Transverse colon (tissue), 4 donors: ENCODE measurements at regions of chr1 and their contacts with region 1.

Region 1: DNA sequence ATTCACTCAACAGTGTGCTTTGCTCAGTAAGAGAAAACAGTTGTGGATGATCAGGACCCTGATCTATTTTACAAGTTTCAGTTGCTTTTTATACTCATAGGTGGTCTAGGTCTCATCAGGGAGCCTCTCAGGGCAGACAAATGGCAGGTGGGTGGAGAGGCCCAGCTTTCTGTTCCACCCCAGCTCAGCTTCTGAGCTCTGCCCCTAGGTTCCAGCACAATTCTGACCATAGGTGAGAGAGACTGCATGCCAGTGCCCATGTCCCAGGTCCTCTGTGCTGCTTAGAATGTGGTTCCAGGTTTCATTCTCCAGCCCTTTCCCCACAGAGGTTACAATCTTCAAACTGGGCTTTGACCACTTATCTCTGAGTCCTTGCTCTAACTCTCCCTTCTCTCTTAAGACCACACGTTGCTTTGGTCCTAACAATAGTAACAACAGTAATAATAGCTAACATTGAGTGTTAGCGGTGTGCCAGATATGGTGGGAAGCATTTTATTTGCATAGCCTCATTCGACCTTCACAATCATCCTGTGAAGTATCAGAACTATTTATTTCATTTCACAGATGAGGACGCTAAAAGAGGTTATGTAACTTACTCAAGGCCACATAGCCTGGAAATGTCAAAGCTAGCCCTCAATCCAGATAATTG is 19.6 kb upstream of the DUSP10 start:
- DNase-seq: no peak
- H3K4me3 ChIP-seq: no peak overlapping the region
- H3K27ac ChIP-seq: no peak overlapping the region
- H3K4me1 ChIP-seq: no peaks in the 10 kb centered on the region
- H3K27me3 ChIP-seq: no peaks in the 10 kb centered on the region
- CTCF ChIP-seq: no peak
- EP300 ChIP-seq: no peak
- POLR2A ChIP-seq: no peak

Region 2: DNA sequence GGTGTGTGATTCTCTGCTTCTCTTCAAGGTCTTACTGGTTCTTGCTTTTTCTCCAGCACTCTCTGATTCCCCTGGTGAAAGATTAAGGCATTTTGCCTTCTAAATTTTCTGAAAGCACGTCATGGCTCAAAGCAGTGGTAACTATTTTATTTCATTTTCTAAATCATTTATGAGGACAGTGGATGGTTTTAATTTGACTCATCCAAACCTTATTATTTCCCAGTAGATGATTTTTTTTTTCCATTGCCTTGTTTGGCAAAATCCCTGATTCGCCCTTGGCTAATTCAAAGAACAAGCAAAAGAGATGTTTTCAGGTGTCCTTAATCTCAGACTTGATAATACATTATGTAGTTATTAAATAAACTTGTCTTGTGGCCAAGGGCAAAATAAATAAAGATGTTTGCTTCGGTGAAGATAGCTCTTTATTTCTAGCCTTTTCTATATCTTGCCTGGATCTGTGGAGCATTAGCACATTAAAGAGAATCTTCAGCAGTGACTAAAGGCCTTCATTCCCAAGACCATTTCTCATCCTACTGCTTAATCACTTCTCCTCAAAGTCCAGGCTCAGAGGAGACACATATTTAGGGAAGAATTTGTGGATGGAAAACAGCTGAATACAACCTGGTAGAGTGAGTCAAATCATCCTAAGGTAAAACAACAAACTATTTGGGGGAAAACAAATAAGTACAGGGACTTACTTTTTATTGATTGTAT is 379.4 kb before region 1 on chr1:
- in situ Hi-C with region 1: no loop called
- intact Hi-C with region 1: no loop called
- DNase-seq: no peak
- H3K4me3 ChIP-seq: no peak overlapping the region
- H3K27ac ChIP-seq: no peak overlapping the region
- H3K4me1 ChIP-seq: no peaks in the 10 kb centered on the region
- H3K27me3 ChIP-seq: no peaks in the 10 kb centered on the region
- CTCF ChIP-seq: no peak
- EP300 ChIP-seq: no peak
- POLR2A ChIP-seq: no peak

Region 3: DNA sequence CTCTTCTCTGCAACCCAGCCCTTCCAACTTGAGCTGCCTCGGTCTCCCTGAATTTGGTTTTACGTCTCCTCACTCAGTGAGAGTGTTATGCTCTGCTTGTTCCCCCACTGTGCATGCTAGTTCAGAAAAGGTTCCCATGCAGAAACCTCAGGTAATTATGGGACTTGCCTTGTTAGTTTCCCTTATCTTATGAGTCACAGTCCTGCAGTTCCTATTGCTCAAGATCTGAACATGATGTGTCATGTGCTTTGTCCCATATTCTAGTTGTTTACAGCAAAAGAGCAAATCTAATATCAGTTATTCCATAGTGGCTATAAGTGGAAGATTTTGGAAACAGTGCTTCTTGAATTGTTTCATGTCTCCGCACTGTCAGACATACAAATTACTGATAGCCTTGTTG is 94.0 kb before region 1 on chr1:
- in situ Hi-C with region 1: no loop called
- intact Hi-C with region 1: no loop called
- DNase-seq: no peak
- H3K4me3 ChIP-seq: no peak overlapping the region
- H3K27ac ChIP-seq: no peak overlapping the region
- H3K4me1 ChIP-seq: no peaks in the 10 kb centered on the region
- H3K27me3 ChIP-seq: no peaks in the 10 kb centered on the region
- CTCF ChIP-seq: no peak
- EP300 ChIP-seq: no peak
- POLR2A ChIP-seq: no peak

Region 4: GRCh38 chr1:221788466-221788865 is 27.0 kb after region 1 on chr1:
- in situ Hi-C with region 1: no loop called
- intact Hi-C with region 1: loop called (anchors 1 kb)
- DNase-seq: no peak
- H3K4me3 ChIP-seq: no peak overlapping the region
- H3K27ac ChIP-seq: no peak overlapping the region
- H3K4me1 ChIP-seq: no peaks in the 10 kb centered on the region
- H3K27me3 ChIP-seq: no peaks in the 10 kb centered on the region
- CTCF ChIP-seq: no peak
- EP300 ChIP-seq: no peak
- POLR2A ChIP-seq: no peak

Region 5: GRCh38 chr1:222441066-222441465 is 679.6 kb after region 1 on chr1:
- in situ Hi-C with region 1: loop called in 1 of 4 experiments (anchors 10 kb)
- intact Hi-C with region 1: no loop called
- DNase-seq: no peak
- H3K4me3 ChIP-seq: no peak overlapping the region
- H3K27ac ChIP-seq: no peak overlapping the region
- H3K4me1 ChIP-seq: no peaks in the 10 kb centered on the region
- H3K27me3 ChIP-seq: no peaks in the 10 kb centered on the region
- CTCF ChIP-seq: no peak
- EP300 ChIP-seq: no peak
- POLR2A ChIP-seq: no peak